ENCODE measurements at regions of chr11 and their contacts with region 1.

Region 1: DNA sequence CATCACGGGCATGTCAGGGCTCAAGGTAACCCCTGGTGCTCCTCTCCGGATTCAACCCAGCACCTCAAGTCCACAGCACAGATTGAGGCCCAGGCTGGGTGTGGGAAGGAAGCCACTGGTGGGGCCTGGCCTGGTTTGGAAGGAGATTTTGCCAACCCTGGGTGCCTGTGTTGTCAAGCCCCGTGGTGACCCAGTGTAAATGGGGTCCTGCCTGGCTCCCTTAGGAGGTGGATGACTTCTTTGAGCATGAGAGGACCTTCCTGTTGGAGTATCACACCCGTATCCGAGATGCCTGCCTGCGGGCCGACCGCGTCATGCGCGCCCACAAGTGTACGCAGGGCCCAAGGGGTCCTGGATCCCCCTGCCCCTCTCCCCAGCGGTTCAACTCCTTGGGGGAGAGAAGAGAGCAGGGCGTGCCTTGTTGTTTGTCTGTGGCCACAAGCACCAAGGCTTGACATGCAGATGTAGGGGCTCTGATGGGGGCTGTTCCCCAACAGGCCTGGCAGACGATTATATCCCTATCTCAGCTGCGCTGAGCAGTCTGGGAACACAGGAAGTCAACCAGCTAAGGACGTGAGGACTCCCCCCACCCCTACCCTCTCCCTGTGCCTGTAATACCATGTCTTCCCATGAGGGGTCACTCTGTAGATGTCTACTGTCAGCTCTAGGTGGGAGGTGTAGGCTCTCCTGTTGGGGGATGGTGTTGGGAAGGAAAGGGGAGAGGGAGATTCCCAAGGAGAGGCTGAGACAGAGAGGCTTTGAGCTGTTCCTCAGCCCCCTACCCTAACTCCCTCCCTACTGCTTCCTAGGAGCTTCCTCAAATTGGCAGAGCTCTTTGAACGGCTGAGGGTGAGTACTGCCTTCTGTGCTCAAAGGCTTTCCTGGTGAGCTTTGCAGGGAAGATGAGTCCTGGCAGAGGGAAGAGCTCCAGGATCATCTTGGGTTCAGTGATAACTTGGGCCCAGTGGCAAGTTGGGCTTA is 6.9 kb downstream of the CFL1 start:
- DNase-seq: peak; percentile 63
- ATAC-seq: peak; percentile 65
- H3K4me3 Mint-ChIP-seq: no peak overlapping the region
- H3K27ac Mint-ChIP-seq: peak overlapping the region; percentile 41; the same call in 1 of the 2 replicates
- H3K4me1 Mint-ChIP-seq: peaks cover 17% of the 10 kb centered on the region
- H3K27me3 Mint-ChIP-seq: peaks cover 10% of the 10 kb centered on the region
- CTCF ChIP-seq: peak; percentile 69

Region 2: GRCh38 chr11:65574109-65574810 is 276.9 kb before region 1 on chr11:
- CTCF ChIA-PET with region 1: no interaction called
- POLR2A ChIA-PET with region 1: no interaction called
- DNase-seq: peak; percentile 90
- ATAC-seq: peak; percentile 50
- H3K4me3 Mint-ChIP-seq: peak overlapping the region; percentile 84
- H3K27ac Mint-ChIP-seq: no peak overlapping the region
- H3K4me1 Mint-ChIP-seq: peaks cover 39% of the 10 kb centered on the region
- H3K27me3 Mint-ChIP-seq: peaks cover 38% of the 10 kb centered on the region
- CTCF ChIP-seq: peak; percentile 91

Region 3: DNA sequence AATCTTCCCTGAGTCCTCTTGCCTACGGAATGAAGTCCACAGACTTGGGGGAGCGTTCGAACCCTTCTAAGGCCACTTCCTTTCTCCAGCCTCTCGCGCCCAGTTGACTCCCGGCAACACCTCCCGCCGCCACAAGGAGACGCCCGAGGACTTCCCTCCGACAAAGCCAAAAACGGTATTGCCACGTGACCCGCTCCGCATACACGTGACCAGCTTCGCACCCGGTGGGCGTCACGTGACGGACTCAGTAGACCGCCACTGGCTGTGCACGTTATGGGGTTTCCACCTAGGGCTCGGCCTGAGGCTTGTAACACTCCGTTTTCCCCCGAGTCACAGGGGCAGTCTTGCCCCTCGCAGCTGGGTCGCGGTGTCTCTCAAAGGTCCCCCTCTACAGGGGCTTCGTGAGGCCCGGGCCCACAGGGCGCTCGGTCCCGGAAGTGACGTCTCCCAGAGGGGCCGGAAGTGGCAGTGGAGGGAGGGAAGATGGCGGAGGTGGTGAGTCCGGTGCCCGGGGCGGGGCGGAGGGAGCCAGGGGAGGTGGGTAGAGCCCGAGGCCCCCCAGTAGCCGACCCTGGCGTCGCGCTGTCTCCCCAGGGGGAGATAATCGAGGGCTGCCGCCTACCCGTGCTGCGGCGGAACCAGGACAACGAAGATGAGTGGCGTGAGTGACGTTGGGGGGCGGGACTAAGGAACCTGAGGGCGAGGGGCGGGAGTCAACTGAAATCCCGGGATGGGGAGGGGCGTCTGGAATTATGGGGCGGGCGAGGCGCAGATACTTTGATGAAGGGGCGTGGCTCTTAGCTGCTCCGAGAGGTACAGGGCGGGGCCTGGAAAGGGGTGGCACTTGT is 139.1 kb before region 1 on chr11 and contains the start of gene KAT5:
- CTCF ChIA-PET with region 1: interaction called, 12 read pairs
- POLR2A ChIA-PET with region 1: no interaction called
- DNase-seq: peak; percentile 99
- ATAC-seq: peak; percentile 93
- H3K4me3 Mint-ChIP-seq: peak within 1 kb of the TSS; percentile 82
- H3K27ac Mint-ChIP-seq: peak within 1 kb of the TSS; percentile 96
- H3K4me1 Mint-ChIP-seq: 0 out of 2 replicates have a peak, but pooled peaks cover 3% of the 10 kb centered on the region
- H3K27me3 Mint-ChIP-seq: peaks cover 6% of the 10 kb centered on the region
- CTCF ChIP-seq: peak; percentile 86
- total RNA-seq, gene KAT5: 44.9 to 56.6 TPM (median 46.0 TPM) in 3 replicates

Region 4: GRCh38 chr11:65791691-65792213 is 59.4 kb before region 1 on chr11:
- CTCF ChIA-PET with region 1: interaction called, 12 read pairs
- POLR2A ChIA-PET with region 1: no interaction called
- DNase-seq: no peak
- ATAC-seq: no peak
- H3K4me3 Mint-ChIP-seq: no peak overlapping the region
- H3K27ac Mint-ChIP-seq: no peak overlapping the region
- H3K4me1 Mint-ChIP-seq: peaks cover 32% of the 10 kb centered on the region
- H3K27me3 Mint-ChIP-seq: peaks cover 18% of the 10 kb centered on the region
- CTCF ChIP-seq: no peak

Region 5: GRCh38 chr11:65833297-65834030 is 17.7 kb before region 1 on chr11 and contains the start of gene SNX32:
- CTCF ChIA-PET with region 1: interaction called, 32 read pairs
- POLR2A ChIA-PET with region 1: interaction called, 3 read pairs
- DNase-seq: peak; percentile 97
- ATAC-seq: peak; percentile 97
- H3K4me3 Mint-ChIP-seq: no peak within 1 kb of the TSS
- H3K27ac Mint-ChIP-seq: no peak within 1 kb of the TSS
- H3K4me1 Mint-ChIP-seq: peaks cover 10% of the 10 kb centered on the region
- H3K27me3 Mint-ChIP-seq: peaks cover 19% of the 10 kb centered on the region
- CTCF ChIP-seq: no peak
- total RNA-seq, gene SNX32: 2.2 to 3.4 TPM (median 2.9 TPM) in 3 replicates

Region 6: GRCh38 chr11:65911682-65912568 is 60.8 kb after region 1 on chr11:
- CTCF ChIA-PET with region 1: interaction called, 10 read pairs
- POLR2A ChIA-PET with region 1: no interaction called
- DNase-seq: peak; percentile 69
- ATAC-seq: peak; percentile 81
- H3K4me3 Mint-ChIP-seq: no peak overlapping the region
- H3K27ac Mint-ChIP-seq: no peak overlapping the region
- H3K4me1 Mint-ChIP-seq: peaks cover 17% of the 10 kb centered on the region
- H3K27me3 Mint-ChIP-seq: peaks cover 27% of the 10 kb centered on the region
- CTCF ChIP-seq: no peak